Activated naive CD4-positive, alpha-beta T cell treated with anti-CD3 and anti-CD28 coated beads for 36 hours (primary cell): ENCODE measurements at regions of chr4 and their contacts with region 1.

Region 1: DNA sequence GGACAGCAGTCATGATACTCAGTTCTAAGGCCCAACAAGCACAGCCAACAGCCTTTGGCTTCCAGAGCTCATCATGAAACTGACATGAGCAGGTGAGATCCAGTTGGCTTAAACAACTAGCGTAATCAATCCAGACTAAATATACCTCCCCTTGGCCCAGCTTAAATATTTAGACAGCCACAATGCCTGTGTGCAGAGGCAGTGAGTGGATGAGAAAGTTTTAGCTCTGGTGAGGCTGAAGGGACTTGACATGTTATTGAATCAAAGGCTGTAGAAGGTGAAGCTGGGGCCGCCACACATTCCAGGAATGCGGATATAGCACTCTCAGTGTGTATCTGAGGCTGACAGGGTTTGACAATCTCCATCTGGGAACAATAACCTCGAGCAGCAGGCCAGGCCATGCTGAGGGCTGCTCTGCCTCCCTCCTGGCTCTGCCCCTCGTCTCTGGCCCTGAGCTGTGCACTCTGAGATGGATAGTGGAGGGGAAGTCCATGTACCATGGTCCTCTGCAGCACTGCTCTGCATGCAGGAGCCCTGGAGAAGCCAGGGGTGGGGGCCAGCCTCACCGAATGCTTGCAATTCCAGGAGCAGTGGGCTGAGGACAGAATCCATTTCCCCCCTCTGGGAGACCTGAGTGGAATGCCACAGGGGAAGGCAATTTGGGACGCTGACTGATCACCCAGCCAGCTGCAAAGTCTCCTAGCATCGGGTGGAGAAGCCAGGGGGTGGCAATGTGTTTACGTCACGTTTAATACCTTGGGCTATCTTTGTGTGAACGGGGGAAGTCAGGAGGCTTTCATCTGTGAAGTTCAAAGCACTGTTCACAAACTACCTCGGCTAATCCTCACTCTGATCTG is 37.3 kb upstream of the RASL11B start:
- DNase-seq: no peak
- H3K4me3 Mint-ChIP-seq: no peak overlapping the region
- H3K27ac Mint-ChIP-seq: no peak overlapping the region
- H3K4me1 Mint-ChIP-seq: peaks cover 29% of the 10 kb centered on the region
- H3K27me3 Mint-ChIP-seq: no peaks in the 10 kb centered on the region

Region 2: GRCh38 chr4:52192721-52193135 is 632.1 kb before region 1 on chr4:
- CTCF ChIA-PET with region 1: no interaction called
- intact Hi-C with region 1: no loop called
- DNase-seq: no peak
- H3K4me3 Mint-ChIP-seq: no peak overlapping the region
- H3K27ac Mint-ChIP-seq: no peak overlapping the region
- H3K4me1 Mint-ChIP-seq: no peaks in the 10 kb centered on the region
- H3K27me3 Mint-ChIP-seq: no peaks in the 10 kb centered on the region

Region 3: DNA sequence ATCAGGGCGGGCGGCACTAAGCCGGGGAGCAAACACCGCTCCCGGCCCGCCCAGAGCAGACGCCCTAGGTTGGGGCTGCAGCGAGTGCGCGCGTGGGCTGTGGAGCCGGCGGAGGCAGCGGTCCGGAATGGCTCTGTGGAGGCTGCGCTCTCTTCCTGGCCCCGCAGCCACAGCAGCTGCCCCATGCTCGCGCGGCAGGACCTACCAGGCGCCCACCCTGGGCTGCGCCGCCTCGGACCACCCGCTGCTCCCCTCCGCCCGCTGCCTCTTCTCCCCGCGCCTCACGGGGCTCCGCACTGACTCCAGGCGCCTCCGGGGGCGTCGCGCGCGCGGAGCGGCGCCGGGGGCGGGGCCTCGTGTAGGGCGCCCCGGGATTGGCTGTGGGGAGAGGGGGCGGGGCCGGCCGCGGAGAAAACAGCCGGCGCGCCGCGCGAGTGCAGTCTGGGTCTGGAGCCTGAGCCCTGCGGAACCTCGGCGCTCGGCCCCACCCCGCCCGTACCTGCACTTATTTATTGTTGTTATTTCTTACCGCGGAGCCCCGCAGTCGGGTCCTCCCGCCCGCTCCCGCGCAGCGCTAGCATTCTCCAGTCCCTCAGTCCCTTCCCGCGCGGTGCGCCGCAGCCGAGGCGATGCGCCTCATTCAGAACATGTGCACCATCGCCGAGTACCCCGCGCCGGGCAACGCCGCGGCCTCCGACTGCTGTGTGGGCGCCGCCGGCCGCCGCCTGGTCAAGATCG is 37.2 kb after region 1 on chr4 and contains the start of gene RASL11B:
- CTCF ChIA-PET with region 1: no interaction called
- intact Hi-C with region 1: loop called (anchors 5 kb)
- DNase-seq: peak; percentile 79
- H3K4me3 Mint-ChIP-seq: peak within 1 kb of the TSS; percentile 69
- H3K27ac Mint-ChIP-seq: no peak within 1 kb of the TSS
- H3K4me1 Mint-ChIP-seq: peaks cover 3% of the 10 kb centered on the region
- H3K27me3 Mint-ChIP-seq: peaks cover 22% of the 10 kb centered on the region
- total RNA-seq, gene RASL11B: 0.24 TPM in 1 of 2 experiments, not detected in the other

Region 4: DNA sequence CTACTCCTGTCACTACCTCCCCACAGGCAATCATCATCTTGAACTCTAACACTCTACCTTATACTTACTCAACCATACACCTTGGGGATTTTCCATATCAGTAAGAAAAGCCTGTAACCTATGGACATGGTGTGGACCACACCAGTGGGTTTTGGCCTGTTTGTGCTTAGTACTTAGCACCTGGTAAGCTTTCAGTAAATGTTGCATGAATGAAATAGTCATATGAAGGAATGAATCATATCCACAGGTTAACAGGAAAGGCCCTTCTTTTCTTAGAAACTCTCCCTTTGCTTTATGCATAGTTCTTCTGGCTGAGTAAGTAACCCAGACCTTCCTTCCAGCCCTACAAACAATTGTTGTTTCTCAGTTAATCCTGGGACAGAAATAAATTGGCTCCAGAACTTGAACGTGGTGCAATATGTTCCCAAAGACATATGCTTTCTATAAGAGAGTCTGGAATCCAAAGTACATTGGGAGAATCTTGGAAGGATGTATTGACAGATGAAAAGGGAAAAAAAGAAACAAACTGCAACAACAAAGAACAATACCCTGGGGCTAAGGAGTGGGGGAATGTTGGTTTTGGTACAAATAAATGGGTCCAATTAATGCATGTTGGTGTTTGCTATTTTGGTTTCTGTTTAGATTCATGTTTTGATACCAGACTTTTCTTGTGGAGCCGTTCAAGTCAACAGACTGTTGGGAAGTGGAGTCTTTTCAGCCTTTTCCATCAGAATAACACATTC is 65.1 kb after region 1 on chr4:
- CTCF ChIA-PET with region 1: no interaction called
- intact Hi-C with region 1: loop called (anchors 2 kb)
- DNase-seq: peak; percentile 25
- H3K4me3 Mint-ChIP-seq: no peak overlapping the region
- H3K27ac Mint-ChIP-seq: peak overlapping the region; percentile 25
- H3K4me1 Mint-ChIP-seq: peaks cover 16% of the 10 kb centered on the region
- H3K27me3 Mint-ChIP-seq: no peaks in the 10 kb centered on the region